ENCODE measurements at regions of chr12 and their contacts with region 1.

Region 1: GRCh38 chr12:5988659-5989116 is 43.6 kb upstream of the ANO2 start:
- DNase-seq: peak; percentile 86
- ATAC-seq: peak; percentile 92 to 95
- H3K4me3 ChIP-seq: no peak overlapping the region
- H3K27ac ChIP-seq: no peak overlapping the region
- H3K4me1 ChIP-seq: no peaks in the 10 kb centered on the region
- H3K27me3 ChIP-seq: no peaks in the 10 kb centered on the region
- CTCF ChIP-seq: peak; percentile 98

Region 2: GRCh38 chr12:6039894-6040568 is 51.3 kb after region 1 on chr12:
- intact Hi-C with region 1: loop called (anchors 5 kb)
- DNase-seq: no peak
- ATAC-seq: peak; percentile 82 to 84
- H3K4me3 ChIP-seq: no peak overlapping the region
- H3K27ac ChIP-seq: no peak overlapping the region
- H3K4me1 ChIP-seq: no peaks in the 10 kb centered on the region
- H3K27me3 ChIP-seq: no peaks in the 10 kb centered on the region
- CTCF ChIP-seq: peak; percentile 86

Measured in lower lobe of right lung (tissue), 2 donors.